Gastrocnemius medialis (tissue), 4 donors: ENCODE measurements at regions of chr2 and their contacts with region 1.

Region 1: GRCh38 chr2:28842042-28842441 is 28.1 kb downstream of the TRMT61B start:
- DNase-seq: no peak
- ATAC-seq: no peak
- H3K4me3 ChIP-seq: no peak overlapping the region
- H3K27ac ChIP-seq: no peak overlapping the region
- H3K4me1 ChIP-seq: peaks cover 4% of the 10 kb centered on the region in 2 donors
- H3K27me3 ChIP-seq: no peaks in the 10 kb centered on the region
- CTCF ChIP-seq: no peak
- POLR2A ChIP-seq: no peak

Region 2: DNA sequence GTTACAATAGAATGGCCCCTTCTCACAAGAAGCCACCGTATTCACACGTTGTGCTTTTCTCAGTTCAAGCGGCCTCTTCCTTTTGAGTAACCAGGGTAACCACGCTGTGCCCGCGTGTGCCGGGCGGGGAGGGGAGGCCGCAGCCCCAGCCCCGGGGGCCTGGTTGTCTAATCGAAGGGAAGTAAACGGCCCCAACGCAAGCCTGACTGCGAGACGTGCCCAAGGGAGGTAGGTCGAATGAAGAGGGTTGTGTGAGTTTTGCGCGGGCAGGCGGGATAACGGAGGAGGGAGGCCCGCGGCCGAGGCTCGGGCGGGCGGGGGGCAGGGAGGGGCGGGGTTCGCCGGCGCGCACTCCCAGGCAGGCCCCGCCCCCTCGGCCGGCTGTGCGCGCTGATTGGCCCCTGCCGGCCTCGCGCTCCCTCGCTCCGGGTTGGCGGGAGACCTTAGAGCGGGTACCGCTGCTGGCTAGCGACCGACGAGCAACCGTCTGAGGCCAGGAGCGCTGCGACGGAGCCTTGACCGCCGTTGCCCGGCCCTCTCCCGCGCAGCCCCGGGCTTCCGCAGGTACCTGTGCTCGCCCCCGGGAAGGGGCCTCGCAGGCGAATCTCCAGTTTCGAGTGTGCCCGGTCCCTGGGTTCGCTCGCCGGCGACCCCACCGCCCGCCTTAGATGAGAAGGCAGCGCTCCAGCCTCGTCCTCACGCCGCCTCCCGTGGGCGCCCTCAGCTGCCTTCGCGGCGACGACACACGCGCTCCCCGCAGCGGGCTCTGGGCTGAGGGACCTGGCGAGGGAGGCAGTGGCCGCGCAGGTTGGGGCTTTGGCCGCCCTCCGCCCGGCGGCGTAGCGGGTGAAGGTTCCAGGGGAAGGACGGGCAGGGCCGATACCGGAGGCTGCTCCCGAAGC is 31.4 kb before region 1 on chr2 and contains the start of gene SPDYA:
- in situ Hi-C with region 1: no loop called
- intact Hi-C with region 1: no loop called
- DNase-seq: peak; percentile 44 to 54
- ATAC-seq: peak; percentile 77 to 80
- H3K4me3 ChIP-seq: peak within 1 kb of the TSS; percentile 53 to 70 (median 59)
- H3K27ac ChIP-seq: no peak within 1 kb of the TSS
- H3K4me1 ChIP-seq: peaks cover 5 to 11% of the 10 kb centered on the region in 2 donors
- H3K27me3 ChIP-seq: no peaks in the 10 kb centered on the region
- CTCF ChIP-seq: no peak
- POLR2A ChIP-seq: no peak
- total RNA-seq, gene SPDYA: 0.31 TPM in 1 of 4 donors, not detected in the others

Region 3: DNA sequence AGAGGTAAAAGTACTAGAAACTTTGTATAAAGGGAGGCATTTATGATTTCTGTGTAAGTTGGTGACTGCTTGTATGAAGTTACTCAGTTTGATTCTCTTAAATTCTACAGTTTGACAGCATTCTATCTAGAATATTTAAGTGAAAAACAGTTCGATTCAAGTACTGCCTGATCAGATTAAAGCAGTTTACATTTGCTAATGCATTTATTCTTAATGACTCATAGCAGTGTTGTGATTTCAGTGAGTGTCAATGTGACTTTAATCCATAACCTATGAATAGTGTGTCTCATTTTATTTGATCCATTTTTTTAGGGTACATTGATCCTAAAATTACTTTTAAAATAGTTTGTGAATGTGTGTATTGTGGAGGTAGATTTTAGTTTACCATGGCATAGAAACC is 88.2 kb after region 1 on chr2:
- in situ Hi-C with region 1: no loop called
- intact Hi-C with region 1: loop called (anchors 10 kb)
- DNase-seq: no peak
- ATAC-seq: no peak
- H3K4me3 ChIP-seq: no peak overlapping the region
- H3K27ac ChIP-seq: no peak overlapping the region
- H3K4me1 ChIP-seq: no peaks in the 10 kb centered on the region
- H3K27me3 ChIP-seq: no peaks in the 10 kb centered on the region
- CTCF ChIP-seq: no peak
- POLR2A ChIP-seq: no peak